ENCODE measurements at regions of chr6 and their contacts with region 1.

Region 1: DNA sequence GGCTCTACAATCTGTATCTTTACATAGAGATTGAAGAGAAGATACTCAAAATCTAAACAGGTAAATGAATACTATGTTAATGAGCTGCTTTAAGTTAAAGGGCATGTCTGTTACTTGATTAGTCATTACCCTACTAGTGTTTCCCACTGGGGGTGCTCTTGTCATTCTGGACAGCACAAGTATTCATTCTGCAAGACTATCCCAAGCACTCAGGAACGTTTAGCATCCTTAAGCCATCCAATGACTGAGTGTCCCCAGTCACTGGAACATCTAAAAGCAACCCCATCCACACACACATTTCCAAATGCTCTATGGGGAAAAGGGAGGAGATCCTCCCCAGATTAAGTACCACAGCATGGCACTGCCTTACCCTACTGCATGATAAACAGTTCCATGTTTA is 25.7 kb downstream of the EZR start:
- DNase-seq: no peak
- ATAC-seq: peak; percentile 54
- H3K4me3 Mint-ChIP-seq: peak overlapping the region; percentile 44
- H3K27ac Mint-ChIP-seq: peak overlapping the region; percentile 70
- H3K4me1 Mint-ChIP-seq: peaks cover 95% of the 10 kb centered on the region
- H3K27me3 Mint-ChIP-seq: no peaks in the 10 kb centered on the region
- CTCF ChIP-seq: no peak

Region 2: DNA sequence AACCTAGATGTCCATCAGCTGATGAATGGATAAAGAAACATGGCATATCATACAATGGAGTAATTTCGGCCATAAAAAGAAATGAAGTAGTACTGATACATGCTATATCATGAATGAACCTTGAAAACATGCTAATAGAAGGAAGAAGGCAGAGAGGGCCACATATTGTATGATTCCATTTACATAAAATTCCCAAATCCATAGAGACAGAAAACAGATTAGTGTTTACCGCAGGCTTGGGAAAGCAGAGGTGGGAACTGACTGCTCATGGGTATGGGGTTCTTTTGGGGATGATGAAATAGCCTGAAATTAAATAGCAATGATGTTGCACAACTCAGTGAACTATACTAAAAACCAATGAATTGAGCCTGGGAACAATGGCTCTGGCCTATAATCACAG is 683.7 kb before region 1 on chr6:
- CTCF ChIA-PET with region 1: no interaction called
- POLR2A ChIA-PET with region 1: no interaction called
- intact Hi-C with region 1: no loop called
- DNase-seq: no peak
- ATAC-seq: no peak
- H3K4me3 Mint-ChIP-seq: no peak overlapping the region
- H3K27ac Mint-ChIP-seq: no peak overlapping the region
- H3K4me1 Mint-ChIP-seq: no peaks in the 10 kb centered on the region
- H3K27me3 Mint-ChIP-seq: no peaks in the 10 kb centered on the region
- CTCF ChIP-seq: no peak

Region 3: DNA sequence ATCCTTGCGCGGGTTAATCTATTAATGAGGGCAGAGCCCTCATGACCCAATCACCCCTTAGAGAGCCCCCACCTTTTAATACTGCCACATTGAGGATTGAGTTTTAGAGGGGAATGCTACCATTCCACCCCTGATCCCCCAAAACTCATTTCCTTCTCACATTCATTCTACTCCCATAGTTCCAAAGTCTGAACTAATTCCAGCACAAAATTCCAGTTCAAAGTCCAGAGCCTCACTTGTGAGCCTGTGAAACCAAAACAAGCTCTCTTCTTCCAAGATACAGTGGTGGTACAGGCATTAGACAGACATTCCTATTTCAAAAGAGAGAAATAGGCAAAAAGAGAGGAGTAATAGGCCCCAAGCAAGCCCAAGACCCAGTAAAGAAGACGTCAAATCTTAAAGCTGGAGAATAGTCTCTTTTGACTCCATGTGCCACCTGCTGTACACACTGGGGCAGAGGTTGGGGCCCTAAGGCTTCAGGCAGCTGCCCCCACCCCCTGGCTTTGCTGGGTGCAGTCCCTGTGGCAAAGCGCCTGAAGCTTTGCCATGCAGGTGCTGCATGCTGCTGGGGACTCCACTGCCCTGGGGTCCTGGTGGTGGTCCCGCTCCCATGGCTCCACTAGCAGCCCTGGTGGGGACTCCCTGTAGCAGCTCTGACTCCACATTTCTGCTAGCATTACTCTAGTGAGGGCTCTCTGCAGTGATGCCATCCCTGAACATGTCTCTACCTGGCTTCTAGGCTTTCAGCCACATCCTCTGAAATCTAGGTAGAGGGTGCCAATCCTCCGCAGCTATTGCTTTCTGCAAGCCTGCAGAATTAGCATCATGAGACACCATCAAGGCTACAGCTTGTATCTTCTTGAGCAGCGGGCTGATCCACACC is 165.3 kb after region 1 on chr6:
- CTCF ChIA-PET with region 1: interaction called, 22 read pairs
- POLR2A ChIA-PET with region 1: interaction called, 6 read pairs
- intact Hi-C with region 1: loop called (anchors 1 kb)
- DNase-seq: peak; percentile 20
- ATAC-seq: peak; percentile 87
- H3K4me3 Mint-ChIP-seq: no peak overlapping the region
- H3K27ac Mint-ChIP-seq: no peak overlapping the region
- H3K4me1 Mint-ChIP-seq: peaks cover 34% of the 10 kb centered on the region
- H3K27me3 Mint-ChIP-seq: no peaks in the 10 kb centered on the region
- CTCF ChIP-seq: no peak